Activated CD4-positive, alpha-beta memory T cell treated with anti-CD3 and anti-CD28 coated beads for 36 hours (primary cell): ENCODE measurements at regions of chr18 and their contacts with region 1.

Region 1: DNA sequence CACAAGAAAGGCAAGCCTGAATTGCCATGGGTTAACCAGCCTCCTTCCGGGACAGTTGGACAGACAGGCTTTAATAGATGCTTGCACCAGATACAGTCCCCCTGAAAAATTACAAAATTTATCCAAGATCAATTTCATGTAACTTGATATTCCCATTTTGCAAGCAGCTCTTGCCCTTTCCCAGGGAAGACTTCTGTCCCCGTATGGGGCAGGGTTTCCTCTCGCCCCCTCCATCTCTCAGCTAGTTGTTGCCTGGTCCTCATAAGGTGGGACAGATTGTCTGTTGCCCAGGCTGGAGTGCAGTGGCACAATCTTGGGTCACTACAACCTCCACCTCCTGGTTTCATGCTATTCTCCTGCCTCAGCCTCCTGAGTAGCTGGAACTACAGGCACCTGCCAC is 61.2 kb downstream of the TTC39C start:
- DNase-seq: no peak
- H3K4me3 Mint-ChIP-seq: peak overlapping the region; percentile 14
- H3K27ac Mint-ChIP-seq: peak overlapping the region; percentile 63
- H3K4me1 Mint-ChIP-seq: peaks cover 56% of the 10 kb centered on the region
- H3K27me3 Mint-ChIP-seq: no peaks in the 10 kb centered on the region

Region 2: DNA sequence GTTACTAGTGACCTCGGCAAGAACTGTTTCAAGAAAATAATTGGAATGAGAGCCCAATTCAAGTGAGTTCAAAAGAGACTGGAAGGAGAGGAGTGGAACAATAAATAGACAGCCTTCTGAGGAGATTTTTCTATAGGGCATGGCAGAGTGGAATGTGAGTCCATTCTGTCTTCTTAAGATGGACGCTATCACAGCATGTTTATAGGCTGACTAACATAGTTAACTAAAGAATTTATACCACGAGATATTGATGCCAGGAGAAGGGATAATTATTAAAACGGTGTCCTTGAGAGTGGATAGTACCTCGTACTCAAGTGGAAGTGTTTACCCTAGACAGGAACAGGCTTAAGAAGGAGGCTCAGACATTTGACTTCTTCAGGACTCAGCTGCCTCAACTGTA is 1286.1 kb before region 1 on chr18:
- CTCF ChIA-PET with region 1: no interaction called
- POLR2A ChIA-PET with region 1: no interaction called
- intact Hi-C with region 1: no loop called
- DNase-seq: no peak
- H3K4me3 Mint-ChIP-seq: no peak overlapping the region
- H3K27ac Mint-ChIP-seq: no peak overlapping the region
- H3K4me1 Mint-ChIP-seq: no peaks in the 10 kb centered on the region
- H3K27me3 Mint-ChIP-seq: peaks cover 16% of the 10 kb centered on the region

Region 3: DNA sequence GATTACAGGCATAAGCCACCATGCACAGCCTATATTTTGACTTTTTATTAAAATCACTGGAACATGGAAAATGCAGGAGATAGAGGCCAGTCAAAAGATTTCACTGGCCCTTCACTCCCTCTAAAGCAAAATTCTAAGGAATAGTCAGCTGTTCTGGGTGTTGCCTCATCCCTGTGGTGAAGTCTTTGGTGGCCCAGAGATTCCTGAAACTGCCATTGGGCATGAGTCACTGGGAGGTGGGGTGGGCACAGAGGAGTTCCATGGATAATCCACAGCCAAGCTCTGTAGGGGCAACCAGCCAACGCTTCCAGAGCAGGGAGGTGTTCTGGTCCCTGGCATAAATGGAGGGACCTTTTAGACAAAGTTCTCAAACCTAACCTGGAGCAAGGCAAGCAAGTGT is 150.9 kb before region 1 on chr18:
- CTCF ChIA-PET with region 1: interaction called, 4 read pairs
- POLR2A ChIA-PET with region 1: no interaction called
- intact Hi-C with region 1: loop called (anchors 5 kb)
- DNase-seq: no peak
- H3K4me3 Mint-ChIP-seq: no peak overlapping the region
- H3K27ac Mint-ChIP-seq: no peak overlapping the region
- H3K4me1 Mint-ChIP-seq: peaks cover 24% of the 10 kb centered on the region
- H3K27me3 Mint-ChIP-seq: no peaks in the 10 kb centered on the region

Region 4: GRCh38 chr18:24054130-24054529 is 21.6 kb before region 1 on chr18:
- CTCF ChIA-PET with region 1: interaction called, 9 read pairs
- POLR2A ChIA-PET with region 1: interaction called, 15 read pairs
- intact Hi-C with region 1: loop called (anchors 1 kb)
- DNase-seq: peak; percentile 60
- H3K4me3 Mint-ChIP-seq: no peak overlapping the region
- H3K27ac Mint-ChIP-seq: peak overlapping the region; percentile 20
- H3K4me1 Mint-ChIP-seq: peaks cover 80% of the 10 kb centered on the region
- H3K27me3 Mint-ChIP-seq: no peaks in the 10 kb centered on the region

Region 5: GRCh38 chr18:24118750-24119577 is 43.2 kb after region 1 on chr18:
- CTCF ChIA-PET with region 1: interaction called, 4 read pairs
- POLR2A ChIA-PET with region 1: no interaction called
- intact Hi-C with region 1: loop called (anchors 5 kb)
- DNase-seq: peak; percentile 85
- H3K4me3 Mint-ChIP-seq: no peak overlapping the region
- H3K27ac Mint-ChIP-seq: peak overlapping the region; percentile 49
- H3K4me1 Mint-ChIP-seq: peaks cover 26% of the 10 kb centered on the region
- H3K27me3 Mint-ChIP-seq: no peaks in the 10 kb centered on the region